Activated CD4-positive, alpha-beta memory T cell treated with anti-CD3 and anti-CD28 coated beads for 36 hours (primary cell): ENCODE measurements at regions of chr2 and their contacts with region 1.

Region 1: DNA sequence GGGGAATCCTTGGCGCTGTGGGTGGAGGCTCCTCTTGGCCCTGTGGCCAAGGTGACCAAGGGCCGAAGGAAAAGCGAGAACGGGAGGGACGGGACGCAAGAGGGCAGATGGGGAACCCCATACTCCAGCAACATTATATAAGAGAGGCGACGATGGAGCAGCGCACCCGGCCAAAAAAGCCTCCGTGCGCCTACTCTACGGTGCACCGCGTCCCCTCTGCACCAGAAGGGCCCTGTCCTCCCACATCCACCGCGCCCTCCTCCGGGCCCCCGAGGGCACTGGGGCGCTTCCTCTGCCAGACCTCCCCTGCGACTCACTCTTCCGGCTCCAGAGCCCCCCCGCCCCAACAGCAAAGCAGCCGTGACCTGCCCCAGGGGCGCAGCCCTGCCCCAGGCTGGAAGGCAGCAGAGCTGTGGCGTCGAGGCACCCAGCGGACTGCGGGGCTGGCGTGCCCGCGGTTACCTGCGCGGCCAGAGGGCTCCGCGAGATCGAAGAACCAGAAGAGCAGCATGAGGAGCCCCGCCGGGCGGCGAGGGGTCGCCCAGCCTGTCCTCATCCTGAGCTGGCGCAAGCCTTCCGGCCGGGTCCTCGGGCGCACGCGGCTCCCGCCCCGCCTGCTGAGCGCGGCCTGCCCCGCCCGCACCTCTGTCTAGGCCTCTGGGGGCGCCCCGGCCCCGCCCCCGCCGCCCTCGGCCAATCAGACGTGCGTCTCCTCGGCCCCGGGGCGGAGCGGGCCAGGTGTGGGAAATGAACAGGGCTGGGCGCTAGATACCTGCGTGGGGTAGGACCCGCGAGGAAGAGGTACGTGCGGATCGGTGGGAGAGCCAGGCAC is 106.3 kb upstream of the CD302 start:
- DNase-seq: peak; percentile 88
- H3K4me3 Mint-ChIP-seq: peak within 1 kb of the TSS; percentile 91
- H3K27ac Mint-ChIP-seq: peak within 1 kb of the TSS; percentile 92
- H3K4me1 Mint-ChIP-seq: peaks cover 68% of the 10 kb centered on the region
- H3K27me3 Mint-ChIP-seq: no peaks in the 10 kb centered on the region

Region 2: GRCh38 chr2:159516241-159516766 is 388.0 kb before region 1 on chr2:
- CTCF ChIA-PET with region 1: no interaction called
- POLR2A ChIA-PET with region 1: no interaction called
- intact Hi-C with region 1: loop called (anchors 10 kb)
- DNase-seq: no peak
- H3K4me3 Mint-ChIP-seq: peak overlapping the region; percentile 69
- H3K27ac Mint-ChIP-seq: peak overlapping the region; percentile 59
- H3K4me1 Mint-ChIP-seq: peaks cover 27% of the 10 kb centered on the region
- H3K27me3 Mint-ChIP-seq: no peaks in the 10 kb centered on the region

Region 3: DNA sequence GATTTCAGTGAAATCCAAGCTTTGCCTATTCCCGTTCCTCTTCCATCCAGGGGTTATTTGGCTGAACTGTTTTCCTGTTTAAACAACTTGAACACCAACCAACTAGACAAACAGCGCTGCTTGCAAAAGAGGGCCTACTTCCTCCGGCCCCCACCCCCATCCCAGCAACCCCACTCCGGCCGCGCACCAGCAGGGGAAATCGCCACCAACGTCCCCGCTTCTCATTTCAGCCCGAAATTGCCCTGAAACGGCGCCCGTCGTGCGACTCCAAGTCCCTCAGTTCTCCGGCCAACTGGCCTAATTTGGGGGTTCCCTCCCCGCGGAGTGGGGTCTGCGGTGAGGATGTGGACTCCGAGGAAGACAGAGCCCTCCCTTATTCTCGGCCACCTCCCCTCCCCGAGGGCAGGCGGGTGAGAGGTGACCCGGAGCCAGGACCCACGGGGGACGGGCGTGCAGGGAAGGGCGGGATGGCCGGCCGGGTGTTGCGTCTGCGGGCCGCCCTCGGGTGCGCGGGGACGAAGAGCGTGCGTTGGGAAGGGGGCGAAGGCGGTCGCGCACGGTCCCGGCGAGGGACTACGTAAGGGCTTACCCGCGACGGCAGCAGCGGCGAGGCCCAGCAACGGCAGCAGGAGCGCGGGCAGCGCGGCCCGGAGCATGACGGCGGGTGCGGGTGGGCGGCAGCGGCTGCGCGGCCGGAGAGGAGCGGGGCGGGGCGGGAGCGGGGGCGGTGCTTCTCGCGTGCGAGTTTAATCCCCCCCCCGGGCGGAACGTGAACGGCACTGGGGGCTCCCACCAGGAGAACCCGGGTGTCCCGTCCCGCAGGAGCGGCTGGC is 106.6 kb before region 1 on chr2 and contains the start of gene CD302:
- CTCF ChIA-PET with region 1: no interaction called
- POLR2A ChIA-PET with region 1: no interaction called
- intact Hi-C with region 1: loop called (anchors 5 kb)
- DNase-seq: peak; percentile 52
- H3K4me3 Mint-ChIP-seq: peak within 1 kb of the TSS; percentile 62
- H3K27ac Mint-ChIP-seq: no peak within 1 kb of the TSS
- H3K4me1 Mint-ChIP-seq: peaks cover 11% of the 10 kb centered on the region
- H3K27me3 Mint-ChIP-seq: peaks cover 30% of the 10 kb centered on the region
- total RNA-seq, gene CD302: 0.55 to 0.56 TPM

Region 4: DNA sequence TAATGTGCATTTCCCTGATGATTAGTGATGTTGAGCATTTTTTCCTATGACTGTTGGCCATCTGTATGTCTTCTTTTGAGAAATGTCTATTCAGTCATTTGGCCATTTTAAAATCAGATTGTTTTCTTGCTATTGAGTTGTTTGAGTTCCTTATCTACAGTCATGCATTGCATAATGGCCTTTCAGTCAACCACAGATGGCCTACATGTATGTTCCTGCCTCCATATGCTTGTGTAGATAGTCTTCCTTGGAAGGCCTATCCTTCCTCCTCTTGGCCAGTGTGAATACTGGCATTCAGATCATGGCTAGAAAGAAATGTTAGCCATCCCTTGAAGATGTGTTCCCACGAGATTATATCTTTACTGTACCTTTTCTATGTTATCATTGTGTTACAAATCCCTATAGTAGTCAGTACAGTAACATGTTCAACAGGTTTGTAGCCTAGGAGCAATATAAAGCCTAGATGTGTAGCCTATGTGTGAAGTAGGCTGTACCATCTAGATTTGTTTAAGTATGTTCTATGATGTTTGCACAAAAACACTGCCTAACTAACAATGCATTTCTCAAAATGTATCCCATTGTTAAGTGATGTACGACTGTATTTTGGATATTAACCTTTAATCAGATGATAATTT is 40.7 kb before region 1 on chr2:
- CTCF ChIA-PET with region 1: no interaction called
- POLR2A ChIA-PET with region 1: no interaction called
- intact Hi-C with region 1: no loop called
- DNase-seq: no peak
- H3K4me3 Mint-ChIP-seq: no peak overlapping the region
- H3K27ac Mint-ChIP-seq: no peak overlapping the region
- H3K4me1 Mint-ChIP-seq: peaks cover 8% of the 10 kb centered on the region
- H3K27me3 Mint-ChIP-seq: no peaks in the 10 kb centered on the region

Region 5: GRCh38 chr2:159921752-159922404 is 17.5 kb after region 1 on chr2:
- CTCF ChIA-PET with region 1: interaction called, 35 read pairs
- POLR2A ChIA-PET with region 1: interaction called, 14 read pairs
- intact Hi-C with region 1: loop called (anchors 1 kb)
- DNase-seq: peak; percentile 90
- H3K4me3 Mint-ChIP-seq: no peak overlapping the region
- H3K27ac Mint-ChIP-seq: no peak overlapping the region
- H3K4me1 Mint-ChIP-seq: peaks cover 35% of the 10 kb centered on the region
- H3K27me3 Mint-ChIP-seq: peaks cover 23% of the 10 kb centered on the region

Region 6: GRCh38 chr2:160043265-160043664 is 138.9 kb after region 1 on chr2:
- CTCF ChIA-PET with region 1: no interaction called
- POLR2A ChIA-PET with region 1: no interaction called
- intact Hi-C with region 1: loop called (anchors 5 kb)
- DNase-seq: no peak
- H3K4me3 Mint-ChIP-seq: no peak overlapping the region
- H3K27ac Mint-ChIP-seq: no peak overlapping the region
- H3K4me1 Mint-ChIP-seq: peaks cover 15% of the 10 kb centered on the region
- H3K27me3 Mint-ChIP-seq: peaks cover 10% of the 10 kb centered on the region

Region 7: DNA sequence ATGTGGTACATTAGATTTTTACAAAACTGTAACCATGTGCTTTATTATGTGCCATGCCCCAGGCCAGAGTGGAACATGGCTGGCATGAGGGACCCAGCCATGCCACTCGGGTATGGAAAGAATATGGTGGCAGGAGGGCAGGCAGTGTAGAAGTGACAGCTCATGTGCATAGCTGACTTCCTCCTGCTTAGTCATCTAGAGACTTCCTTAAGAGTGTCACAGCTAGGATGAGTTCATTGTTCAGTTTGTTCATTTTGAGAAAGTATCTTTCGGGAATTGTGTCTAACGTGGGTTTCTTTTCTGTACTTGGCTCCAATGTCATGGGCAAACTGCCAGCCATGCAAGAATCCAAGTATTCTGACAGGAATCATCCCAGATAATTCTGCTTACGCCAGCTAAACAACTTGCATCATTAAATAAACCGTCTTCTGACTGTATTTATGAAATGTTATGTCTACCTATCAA is 390.0 kb after region 1 on chr2:
- CTCF ChIA-PET with region 1: no interaction called
- POLR2A ChIA-PET with region 1: no interaction called
- intact Hi-C with region 1: loop called (anchors 10 kb)
- DNase-seq: peak; percentile 68
- H3K4me3 Mint-ChIP-seq: no peak overlapping the region
- H3K27ac Mint-ChIP-seq: peak overlapping the region; percentile 18
- H3K4me1 Mint-ChIP-seq: peaks cover 76% of the 10 kb centered on the region
- H3K27me3 Mint-ChIP-seq: no peaks in the 10 kb centered on the region

Region 8: DNA sequence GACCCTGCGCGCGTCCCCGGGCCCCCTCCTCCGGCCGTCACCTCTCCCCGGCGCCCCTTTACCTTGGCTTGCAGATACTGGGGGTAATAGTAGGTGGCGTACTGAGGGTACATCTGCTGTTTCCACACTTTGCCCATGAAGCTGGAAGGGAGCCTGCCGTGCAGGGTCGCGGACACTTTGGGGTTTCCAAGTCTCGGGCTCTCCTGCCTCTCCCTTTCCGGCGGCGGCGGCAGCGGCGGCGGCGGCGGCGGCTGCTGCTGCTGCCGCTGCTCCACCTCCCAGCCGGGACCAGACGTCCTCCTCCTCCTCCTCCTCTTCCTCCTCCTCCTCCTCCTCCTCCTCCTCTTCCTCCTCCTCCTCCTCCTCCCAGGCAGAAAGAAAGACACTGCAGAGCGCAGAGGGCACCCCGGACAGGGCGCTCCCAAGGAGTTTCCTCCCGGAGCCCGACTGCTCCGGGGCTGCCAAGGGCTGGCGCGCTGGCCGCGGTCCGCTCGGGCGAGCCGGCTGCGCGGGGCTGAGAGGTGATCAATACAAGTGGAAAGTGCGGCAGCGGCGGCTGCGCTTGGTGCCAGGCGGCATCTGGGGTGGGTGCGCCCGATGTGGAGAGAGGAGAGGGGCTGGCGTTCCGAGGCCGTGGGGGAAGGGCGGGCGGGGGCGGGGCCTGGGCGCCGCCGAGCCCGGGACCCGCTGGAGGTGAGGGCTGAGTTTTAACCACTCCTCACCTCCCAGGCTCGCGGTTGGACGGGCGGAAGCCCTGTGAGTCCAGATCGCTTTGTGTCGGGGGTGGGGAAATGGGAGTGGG is 589.1 kb after region 1 on chr2 and contains the start of gene RBMS1:
- CTCF ChIA-PET with region 1: no interaction called
- POLR2A ChIA-PET with region 1: no interaction called
- intact Hi-C with region 1: loop called (anchors 5 kb)
- DNase-seq: peak; percentile 59
- H3K4me3 Mint-ChIP-seq: peak within 1 kb of the TSS; percentile 95
- H3K27ac Mint-ChIP-seq: peak within 1 kb of the TSS; percentile 93
- H3K4me1 Mint-ChIP-seq: peaks cover 36% of the 10 kb centered on the region
- H3K27me3 Mint-ChIP-seq: no peaks in the 10 kb centered on the region
- total RNA-seq, gene RBMS1: 37.9 to 40.0 TPM